H1 (cell line): ENCODE measurements at regions of chr5 and their contacts with region 1.

Region 1: DNA sequence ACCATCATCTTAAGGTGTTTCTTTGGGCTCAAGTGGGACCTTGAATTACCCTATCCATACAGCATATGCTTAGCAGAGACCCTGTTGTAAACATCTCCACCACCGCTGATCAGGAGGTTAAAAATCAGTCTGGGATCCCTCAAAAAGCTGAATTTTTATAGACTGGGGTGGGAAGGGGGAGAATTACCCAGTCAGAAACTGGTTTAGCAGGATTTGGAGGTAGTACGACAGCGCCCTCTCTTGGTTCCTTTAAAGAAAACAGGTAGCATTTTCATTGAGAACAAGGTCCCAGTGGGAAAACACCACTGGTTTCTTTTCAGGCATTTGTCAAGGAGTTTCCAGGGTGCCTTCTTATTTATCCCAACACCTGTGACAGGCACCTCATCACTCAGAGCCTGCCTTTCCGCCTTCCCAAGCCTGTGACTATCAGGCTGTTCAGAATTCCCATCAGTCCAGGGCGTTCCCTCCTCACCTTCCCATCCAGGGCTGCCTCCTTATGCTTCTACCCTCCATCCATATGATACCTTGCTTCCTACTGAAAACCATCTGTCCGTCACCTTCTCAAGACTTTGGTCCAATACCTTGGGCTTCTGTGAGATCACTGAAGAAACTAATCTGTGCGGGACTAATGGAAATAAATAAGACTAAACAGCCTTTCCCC is 203.8 kb upstream of the RAI14 start:
- DNase-seq: no peak
- H3K4me3 ChIP-seq: no peak overlapping the region
- H3K27ac ChIP-seq: no peak overlapping the region
- H3K4me1 ChIP-seq: peaks cover 0 to 7% (median 4%) of the 10 kb centered on the region in 4 experiments; a peak in 5 of 7 replicates
- H3K27me3 ChIP-seq: no peaks in the 10 kb centered on the region
- CTCF ChIP-seq: peak in 2 of 3 experiments; percentile 79 to 87; a peak in 3 of 4 replicates
- EP300 ChIP-seq: no peak
- POLR2A ChIP-seq: no peak
- RAD21 ChIP-seq: peak; percentile 96 to 98

Region 2: DNA sequence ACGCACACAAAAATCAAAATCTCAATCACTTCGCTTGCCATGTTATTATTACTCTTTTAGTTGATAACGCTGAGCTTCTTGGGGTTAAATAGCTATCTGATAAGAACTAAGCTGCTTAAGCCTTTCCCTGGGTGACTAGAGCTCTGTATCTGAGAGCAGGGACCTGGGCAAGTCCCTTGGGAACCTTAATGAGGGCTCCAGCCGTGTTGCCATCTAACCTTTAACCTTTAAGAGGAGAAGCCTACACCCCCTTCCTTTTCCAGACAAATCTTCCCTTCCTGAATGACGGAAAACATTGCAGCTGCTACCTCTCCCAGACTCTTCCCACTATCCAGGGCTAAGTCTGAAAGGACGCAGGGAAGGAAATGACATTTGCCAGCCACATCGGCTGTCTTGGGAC is 12.7 kb before region 1 on chr5:
- CTCF ChIA-PET with region 1: interaction called, 26 read pairs
- POLR2A ChIA-PET with region 1: no interaction called
- DNase-seq: no peak
- H3K4me3 ChIP-seq: no peak overlapping the region
- H3K27ac ChIP-seq: no peak overlapping the region
- H3K4me1 ChIP-seq: no peaks in the 10 kb centered on the region
- H3K27me3 ChIP-seq: no peaks in the 10 kb centered on the region
- CTCF ChIP-seq: no peak
- EP300 ChIP-seq: no peak
- POLR2A ChIP-seq: no peak
- RAD21 ChIP-seq: no peak

Region 3: DNA sequence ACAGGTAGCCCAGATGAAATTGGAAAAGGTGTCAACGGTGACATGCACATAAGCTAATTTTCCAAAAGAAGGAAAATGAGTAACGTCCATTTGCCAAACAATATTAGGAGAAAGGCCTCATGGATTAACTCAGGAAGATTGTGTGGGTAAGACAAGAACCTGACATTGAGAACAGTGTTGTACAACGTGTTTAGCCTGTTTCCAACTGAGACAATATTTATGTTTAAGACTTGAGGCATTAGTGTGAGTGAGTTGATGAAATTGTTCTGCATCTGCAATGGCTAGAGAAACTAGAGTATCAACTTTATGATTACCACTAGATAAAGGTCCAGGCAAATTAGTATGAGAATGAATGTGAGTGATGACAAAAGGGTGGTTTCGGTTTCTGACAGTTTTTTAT is 12.5 kb after region 1 on chr5:
- CTCF ChIA-PET with region 1: interaction called, 10 read pairs
- POLR2A ChIA-PET with region 1: no interaction called
- DNase-seq: no peak
- H3K4me3 ChIP-seq: no peak overlapping the region
- H3K27ac ChIP-seq: no peak overlapping the region
- H3K4me1 ChIP-seq: no peaks in the 10 kb centered on the region
- H3K27me3 ChIP-seq: no peaks in the 10 kb centered on the region
- CTCF ChIP-seq: no peak
- EP300 ChIP-seq: no peak
- POLR2A ChIP-seq: no peak
- RAD21 ChIP-seq: no peak